ENCODE measurements at regions of chr22 and their contacts with region 1.

Region 1: GRCh38 chr22:38262051-38262795 is 10.6 kb downstream of the TMEM184B start:
- DNase-seq: no peak

Region 2: DNA sequence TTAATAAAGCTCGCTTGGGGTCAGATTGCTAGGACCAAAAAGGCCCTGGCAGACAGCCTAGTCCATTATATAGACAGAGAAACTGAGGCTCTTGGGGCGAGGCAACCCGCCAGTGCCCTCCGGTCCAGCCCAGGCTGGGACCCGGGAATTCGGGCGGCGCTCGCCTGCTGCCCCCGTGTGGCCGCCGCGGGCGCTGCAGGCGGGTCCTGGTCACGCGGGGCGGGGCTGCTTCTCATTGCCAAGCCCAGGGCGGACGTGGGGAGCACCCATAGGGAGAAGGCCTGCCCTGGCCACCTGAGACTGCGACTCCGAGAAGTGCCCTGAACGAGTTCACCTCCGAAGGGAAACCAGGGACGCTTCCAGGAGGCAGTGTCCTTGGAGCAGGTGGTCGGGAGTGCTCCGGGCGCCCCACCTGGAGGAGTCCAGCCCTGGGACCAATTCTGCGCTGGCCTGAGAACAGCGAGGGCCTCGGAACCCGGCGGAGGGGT is 91.0 kb after region 1 on chr22:
- intact Hi-C with region 1: loop called (anchors 5 kb)
- DNase-seq: peak; percentile 90

Region 3: DNA sequence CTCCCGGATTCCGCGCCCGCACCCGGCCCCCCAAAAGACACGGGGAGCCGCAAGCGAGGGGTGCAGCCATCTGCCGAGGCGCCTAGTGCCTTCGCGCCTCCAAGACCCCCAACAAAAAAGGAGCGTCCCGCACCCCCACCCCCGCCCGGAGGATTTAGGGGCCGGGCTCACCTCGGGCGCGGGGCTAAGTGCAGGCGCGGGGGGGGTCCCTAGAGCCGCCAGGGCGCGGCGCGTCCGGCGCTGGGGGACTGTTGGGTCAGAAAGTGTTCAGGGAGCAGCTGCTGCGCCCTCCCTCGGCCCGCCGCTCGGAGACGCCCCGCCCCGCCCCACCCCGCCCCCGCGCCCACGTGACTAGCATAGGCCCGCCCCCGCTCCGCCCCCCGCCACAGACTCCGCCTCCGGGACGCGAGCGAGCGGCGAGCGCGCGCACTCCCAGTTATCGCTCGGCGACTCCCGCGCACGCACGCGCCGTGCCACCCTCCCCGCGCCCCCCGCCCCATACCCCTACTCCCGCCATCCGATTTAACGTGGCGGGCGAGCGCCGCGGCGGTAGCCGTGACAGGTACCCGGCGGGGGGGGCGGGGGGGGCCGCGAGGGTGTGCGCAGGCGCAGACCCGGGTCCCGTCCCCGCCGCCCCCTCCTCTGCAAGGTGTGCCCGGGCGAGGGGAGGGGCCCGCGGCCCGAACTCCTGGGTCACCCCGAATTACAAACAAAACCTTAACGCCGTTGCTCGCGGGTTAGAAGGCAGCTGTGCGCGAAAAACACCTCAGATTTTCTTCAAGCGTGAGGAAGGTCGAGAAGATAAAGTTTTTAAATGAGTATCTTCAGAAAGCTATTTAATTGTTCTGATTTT is 136.6 kb after region 1 on chr22:
- intact Hi-C with region 1: loop called (anchors 5 kb)
- DNase-seq: peak; percentile 93

Measured in cardiac septum (tissue), 1 donor.